ENCODE measurements at regions of chr1 and their contacts with region 1.

Region 1: DNA sequence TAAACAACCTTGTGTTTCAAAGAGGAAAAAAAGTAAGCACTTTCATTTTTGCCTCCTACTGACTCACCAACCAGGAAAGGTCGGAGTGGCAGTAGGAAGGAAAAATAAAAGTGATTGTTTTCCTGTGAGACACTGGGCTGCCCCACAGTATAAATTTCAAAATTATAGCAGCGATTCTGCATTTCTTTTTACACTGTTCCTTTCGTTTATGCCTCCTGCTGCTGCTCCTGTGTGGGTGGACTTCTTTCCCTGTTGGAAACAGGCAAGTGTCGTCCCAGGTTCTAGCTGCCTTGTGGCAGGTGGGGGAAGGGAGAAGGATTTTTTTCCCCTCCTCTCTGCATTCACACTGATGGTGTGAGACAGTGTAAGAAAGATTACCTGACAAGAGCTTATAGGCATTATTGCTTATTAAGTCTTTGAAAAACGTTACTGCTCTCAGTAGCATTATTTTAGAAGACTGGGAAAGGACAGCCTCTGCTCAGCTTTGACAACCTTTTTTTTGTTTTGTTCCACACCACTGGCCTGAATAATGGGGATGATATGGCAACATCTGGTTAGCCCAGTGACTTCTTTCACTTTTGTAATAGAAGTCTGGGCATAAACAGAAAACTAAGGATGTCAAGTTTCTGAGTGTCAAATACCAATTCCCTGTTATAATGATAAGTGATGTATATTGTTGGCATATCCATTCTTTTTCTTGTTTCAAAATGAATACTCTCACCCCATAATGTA is 77.9 kb downstream of the NEK7 start:
- DNase-seq: peak; percentile 66
- H3K4me3 ChIP-seq: peak overlapping the region in 2 of 3 experiments; percentile 19 to 77
- H3K27ac ChIP-seq: no peak overlapping the region
- H3K4me1 ChIP-seq: peaks cover 15% of the 10 kb centered on the region
- H3K27me3 ChIP-seq: no peaks in the 10 kb centered on the region
- CTCF ChIP-seq: no peak
- POLR2A ChIP-seq: no peak

Region 2: GRCh38 chr1:198253668-198254067 is 19.0 kb after region 1 on chr1:
- CTCF ChIA-PET with region 1: no interaction called
- POLR2A ChIA-PET with region 1: no interaction called
- dilution Hi-C with region 1: no loop called
- intact Hi-C with region 1: loop called (anchors 2 kb)
- DNase-seq: peak; percentile 47
- H3K4me3 ChIP-seq: no peak overlapping the region
- H3K27ac ChIP-seq: no peak overlapping the region
- H3K4me1 ChIP-seq: peaks cover 12% of the 10 kb centered on the region
- H3K27me3 ChIP-seq: no peaks in the 10 kb centered on the region
- CTCF ChIP-seq: no peak
- POLR2A ChIP-seq: no peak

Region 3: DNA sequence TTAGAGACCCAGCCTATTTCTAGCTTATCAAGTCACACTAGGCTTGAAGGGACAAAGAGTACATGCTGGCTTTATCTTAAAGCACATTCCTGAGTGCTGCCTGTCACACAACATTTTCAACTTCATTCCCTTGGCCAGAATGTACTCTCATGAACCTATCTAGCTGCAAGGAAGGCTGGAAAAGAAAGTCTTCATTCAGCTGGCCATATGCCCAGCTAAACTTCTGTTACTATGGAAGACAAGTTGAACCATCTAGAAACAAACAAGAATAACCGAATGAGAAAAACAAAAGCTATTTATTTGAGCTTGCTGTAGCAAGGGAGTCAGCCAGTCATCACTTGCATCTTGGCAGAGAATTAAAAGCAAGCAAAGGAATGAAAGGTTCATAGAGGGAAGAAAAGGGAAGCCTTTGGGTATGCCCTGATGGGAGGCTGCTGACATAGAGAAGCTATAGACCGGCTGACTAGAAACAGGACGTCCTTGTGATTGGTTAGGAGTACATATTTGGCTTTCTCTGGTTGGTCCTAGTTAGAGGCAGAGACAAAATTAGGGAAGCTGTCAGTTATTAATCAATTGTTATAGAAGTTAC is 30.5 kb after region 1 on chr1:
- CTCF ChIA-PET with region 1: interaction called, 3 read pairs
- POLR2A ChIA-PET with region 1: no interaction called
- dilution Hi-C with region 1: no loop called
- intact Hi-C with region 1: loop called (anchors 1 kb)
- DNase-seq: peak; percentile 61
- H3K4me3 ChIP-seq: no peak overlapping the region
- H3K27ac ChIP-seq: no peak overlapping the region
- H3K4me1 ChIP-seq: peaks cover 42% of the 10 kb centered on the region
- H3K27me3 ChIP-seq: no peaks in the 10 kb centered on the region
- CTCF ChIP-seq: no peak
- POLR2A ChIP-seq: no peak